ENCODE measurements at regions of chr7 and their contacts with region 1.

Region 1: GRCh38 chr7:18798088-18798906 is 302.7 kb downstream of the HDAC9 start:
- DNase-seq: no peak
- H3K4me3 ChIP-seq: no peak overlapping the region
- H3K27ac ChIP-seq: no peak overlapping the region
- H3K4me1 ChIP-seq: no peaks in the 10 kb centered on the region
- H3K27me3 ChIP-seq: no peaks in the 10 kb centered on the region
- CTCF ChIP-seq: no peak

Region 2: GRCh38 chr7:18866359-18867036 is 68.2 kb after region 1 on chr7:
- CTCF ChIA-PET with region 1: interaction called, 34 read pairs
- dilution Hi-C with region 1: no loop called
- in situ Hi-C with region 1: no loop called
- intact Hi-C with region 1: no loop called
- DNase-seq: peak; percentile 99
- H3K4me3 ChIP-seq: no peak overlapping the region
- H3K27ac ChIP-seq: peak overlapping the region; percentile 58
- H3K4me1 ChIP-seq: peaks cover 11% of the 10 kb centered on the region
- H3K27me3 ChIP-seq: no peaks in the 10 kb centered on the region
- CTCF ChIP-seq: no peak